ENCODE measurements at regions of chr9 and their contacts with region 1.

Region 1: DNA sequence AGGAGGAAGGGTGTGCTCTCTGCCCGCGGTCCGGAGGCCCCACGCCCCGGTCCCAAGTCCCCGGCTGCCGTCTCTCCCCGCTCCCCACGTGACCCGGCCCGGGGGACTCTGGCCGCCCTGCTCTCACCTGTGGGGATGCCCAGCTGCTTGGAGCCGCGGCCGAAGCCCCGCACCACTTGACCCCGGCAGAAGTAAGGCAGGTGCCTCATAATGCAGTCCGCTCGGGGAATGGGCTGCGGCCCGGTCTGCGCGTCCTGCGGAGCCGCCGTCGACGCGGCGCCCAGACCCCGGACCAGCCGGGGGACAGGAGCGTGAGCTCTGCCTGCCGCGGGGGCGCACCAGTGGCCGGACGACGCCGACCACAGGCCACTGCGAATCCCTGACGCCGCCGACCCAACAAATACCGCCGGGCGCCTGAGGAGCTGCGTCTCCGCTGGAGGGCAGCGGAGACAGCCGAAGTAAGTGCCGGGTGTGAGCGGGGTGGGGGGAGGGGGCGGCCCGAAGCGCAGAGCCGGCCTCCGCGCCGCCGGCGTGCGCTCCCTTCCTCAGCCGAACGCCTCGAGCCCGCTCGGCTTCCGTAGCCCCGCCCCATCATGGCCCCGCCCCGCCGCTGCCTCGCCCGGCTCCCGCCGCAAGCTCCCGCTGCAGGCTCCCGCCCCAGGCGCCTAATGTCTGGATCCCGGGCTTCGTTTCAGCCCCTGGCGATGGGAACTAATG is at the start of gene RFK:
- DNase-seq: peak; percentile 78 to 99
- H3K4me3 ChIP-seq: peak within 1 kb of the TSS; percentile 74 to 86 (median 78)
- H3K27ac ChIP-seq: peak within 1 kb of the TSS; percentile 75
- H3K4me1 ChIP-seq: no peaks in the 10 kb centered on the region
- H3K27me3 ChIP-seq: no peaks in the 10 kb centered on the region
- CTCF ChIP-seq: peak; percentile 34 to 59 (median 45)
- EP300 ChIP-seq: peak in 1 of 2 experiments; percentile 65; a peak in 1 of 3 replicates
- POLR2A ChIP-seq: peak; percentile 50 to 75
- RAD21 ChIP-seq: peak; percentile 60 to 73
- total RNA-seq, gene RFK: 10.6 and 14.9 TPM in 2 replicates

Region 2: DNA sequence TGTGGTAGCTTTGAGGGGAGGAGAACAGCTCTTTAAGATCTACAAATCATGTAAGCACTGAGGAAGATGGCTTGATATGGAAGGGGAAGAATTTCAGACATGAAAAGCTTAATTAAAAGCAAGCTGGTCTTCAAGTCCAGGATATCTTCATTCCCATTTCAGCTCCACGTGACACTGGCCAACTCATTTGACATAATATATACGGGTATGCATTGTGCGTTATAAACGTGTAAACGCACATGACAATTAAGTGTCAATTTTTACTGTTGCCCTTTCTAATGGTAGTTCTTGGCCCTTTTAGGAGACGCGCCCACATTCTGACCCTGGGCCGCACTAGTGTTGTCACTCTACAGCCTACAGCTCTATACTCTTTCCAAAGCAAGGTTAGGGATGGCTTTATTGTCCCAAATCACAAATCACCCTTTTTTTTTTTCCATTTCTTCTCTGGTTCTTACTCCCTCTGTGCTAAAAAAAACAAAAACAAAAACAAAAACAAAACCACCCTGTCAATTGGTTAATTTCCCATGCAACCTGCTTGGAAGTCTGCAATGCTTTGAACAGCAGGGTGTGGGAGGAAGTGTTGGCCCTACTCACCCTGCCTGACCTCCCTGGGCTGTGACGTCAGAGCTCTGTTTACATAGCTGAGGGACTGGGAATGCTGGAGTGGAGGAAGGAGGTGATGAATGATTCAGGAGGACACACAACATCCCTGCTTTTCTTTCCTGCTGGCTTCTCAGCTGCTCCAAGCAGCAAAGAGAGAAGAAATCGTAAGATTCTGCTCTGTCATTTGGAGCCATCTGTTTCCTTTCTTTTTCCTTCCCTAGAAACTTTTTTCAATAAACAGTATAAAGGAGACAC is 19.2 kb before region 1 on chr9:
- CTCF ChIA-PET with region 1: interaction called, 18 read pairs
- POLR2A ChIA-PET with region 1: interaction called, 6 read pairs
- DNase-seq: no peak
- H3K4me3 ChIP-seq: no peak overlapping the region
- H3K27ac ChIP-seq: no peak overlapping the region
- H3K4me1 ChIP-seq: no peaks in the 10 kb centered on the region
- H3K27me3 ChIP-seq: no peaks in the 10 kb centered on the region
- CTCF ChIP-seq: no peak
- EP300 ChIP-seq: no peak
- POLR2A ChIP-seq: no peak
- RAD21 ChIP-seq: no peak

Region 3: GRCh38 chr9:76512826-76513225 is 118.7 kb after region 1 on chr9:
- CTCF ChIA-PET with region 1: no interaction called
- POLR2A ChIA-PET with region 1: no interaction called
- DNase-seq: no peak
- H3K4me3 ChIP-seq: no peak overlapping the region
- H3K27ac ChIP-seq: no peak overlapping the region
- H3K4me1 ChIP-seq: no peaks in the 10 kb centered on the region
- H3K27me3 ChIP-seq: no peaks in the 10 kb centered on the region
- CTCF ChIP-seq: no peak
- EP300 ChIP-seq: no peak
- POLR2A ChIP-seq: no peak
- RAD21 ChIP-seq: no peak

Measured in H1 (cell line).